AG04450 (cell line): ENCODE measurements at regions of chr22 and their contacts with region 1.

Region 1: DNA sequence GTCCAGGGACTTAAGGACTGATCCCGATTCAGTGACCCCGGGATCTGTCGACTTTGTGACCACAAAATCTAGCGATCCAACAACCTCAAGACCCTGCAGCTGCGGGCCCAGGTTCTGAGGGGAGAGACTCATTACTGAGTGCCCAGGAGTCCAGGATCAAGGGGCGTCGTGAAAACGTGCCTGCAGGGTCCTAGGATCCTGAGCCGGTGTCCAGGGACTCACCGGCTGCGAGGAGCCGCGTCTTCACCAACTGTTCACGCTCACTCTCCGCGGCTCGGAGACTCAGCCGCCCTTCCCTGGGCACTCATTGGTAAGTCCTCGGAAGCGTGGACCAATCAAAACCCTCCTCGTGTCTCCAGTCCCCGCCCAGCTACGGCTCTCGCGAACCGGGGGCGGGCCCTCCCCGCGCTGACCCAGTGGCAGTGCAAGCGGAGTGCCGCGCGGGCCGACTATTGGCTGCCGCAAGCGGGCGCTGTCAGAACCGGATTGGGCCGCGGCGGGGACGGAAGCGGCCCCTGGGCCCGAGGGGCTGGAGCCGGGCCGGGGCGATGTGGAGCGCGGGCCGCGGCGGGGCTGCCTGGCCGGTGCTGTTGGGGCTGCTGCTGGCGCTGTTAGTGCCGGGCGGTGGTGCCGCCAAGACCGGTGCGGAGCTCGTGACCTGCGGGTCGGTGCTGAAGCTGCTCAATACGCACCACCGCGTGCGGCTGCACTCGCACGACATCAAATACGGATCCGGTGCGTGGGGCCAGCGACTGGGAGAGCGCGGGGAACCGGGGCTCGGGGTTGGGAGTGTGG is at the start of gene SDF2L1:
- DNase-seq: peak; percentile 97
- H3K4me3 ChIP-seq: peak within 1 kb of the TSS; percentile 86
- H3K27ac ChIP-seq: peak within 1 kb of the TSS; percentile 61
- H3K27me3 ChIP-seq: no peaks in the 10 kb centered on the region
- CTCF ChIP-seq: no peak
- polyA plus RNA-seq, gene SDF2L1: 12.6 and 17.8 TPM in 2 replicates

Region 2: GRCh38 chr22:21629262-21630149 is 12.5 kb before region 1 on chr22 and contains the start of gene YDJC:
- CTCF ChIA-PET with region 1: interaction called, 43 read pairs
- POLR2A ChIA-PET with region 1: interaction called, 11 read pairs
- DNase-seq: peak; percentile 70
- H3K4me3 ChIP-seq: peak within 1 kb of the TSS; percentile 88
- H3K27ac ChIP-seq: peak within 1 kb of the TSS; percentile 61
- H3K27me3 ChIP-seq: no peaks in the 10 kb centered on the region
- CTCF ChIP-seq: peak; percentile 57
- polyA plus RNA-seq, gene YDJC: 9.0 and 12.2 TPM in 2 replicates